Endothelial cell of umbilical vein (primary cell): ENCODE measurements at regions of chr3 and their contacts with region 1.

Region 1: DNA sequence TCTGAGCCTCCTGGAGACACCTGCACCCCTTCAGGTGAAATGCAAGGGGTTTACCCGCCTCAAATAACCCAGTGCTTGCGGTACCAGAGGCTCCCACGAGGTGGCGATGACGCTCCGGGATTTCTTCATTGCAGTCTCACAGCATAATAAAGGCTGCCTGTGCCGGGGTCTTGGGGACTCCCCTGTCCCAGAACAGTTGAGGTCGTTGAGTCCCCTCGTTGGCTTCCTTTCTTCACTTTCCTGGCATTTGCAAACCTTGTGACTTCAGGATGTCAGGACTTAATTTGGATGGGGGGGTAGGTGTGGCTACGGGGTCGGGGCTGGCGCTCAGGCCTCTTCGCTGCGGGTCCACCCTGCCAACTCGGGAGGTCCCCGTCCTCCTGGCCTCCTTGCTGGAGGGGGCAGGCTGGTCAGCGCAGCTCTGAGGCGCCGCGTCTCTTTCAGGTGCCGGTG is 1.3 kb downstream of the GNAT1 start:
- DNase-seq: peak; percentile 69
- H3K4me3 ChIP-seq: no peak overlapping the region
- H3K27ac ChIP-seq: no peak overlapping the region
- H3K4me1 ChIP-seq: peaks cover 5% of the 10 kb centered on the region
- H3K27me3 ChIP-seq: peaks cover 11 to 13% of the 10 kb centered on the region in 2 experiments
- CTCF ChIP-seq: peak; percentile 87 to 92
- POLR2A ChIP-seq: no peak

Region 2: GRCh38 chr3:50008931-50009330 is 183.8 kb before region 1 on chr3:
- CTCF ChIA-PET with region 1: no interaction called
- POLR2A ChIA-PET with region 1: no interaction called
- dilution Hi-C with region 1: no loop called
- intact Hi-C with region 1: no loop called
- DNase-seq: no peak
- H3K4me3 ChIP-seq: no peak overlapping the region
- H3K27ac ChIP-seq: no peak overlapping the region
- H3K4me1 ChIP-seq: no peaks in the 10 kb centered on the region
- H3K27me3 ChIP-seq: no peaks in the 10 kb centered on the region
- CTCF ChIP-seq: no peak
- POLR2A ChIP-seq: no peak

Region 3: DNA sequence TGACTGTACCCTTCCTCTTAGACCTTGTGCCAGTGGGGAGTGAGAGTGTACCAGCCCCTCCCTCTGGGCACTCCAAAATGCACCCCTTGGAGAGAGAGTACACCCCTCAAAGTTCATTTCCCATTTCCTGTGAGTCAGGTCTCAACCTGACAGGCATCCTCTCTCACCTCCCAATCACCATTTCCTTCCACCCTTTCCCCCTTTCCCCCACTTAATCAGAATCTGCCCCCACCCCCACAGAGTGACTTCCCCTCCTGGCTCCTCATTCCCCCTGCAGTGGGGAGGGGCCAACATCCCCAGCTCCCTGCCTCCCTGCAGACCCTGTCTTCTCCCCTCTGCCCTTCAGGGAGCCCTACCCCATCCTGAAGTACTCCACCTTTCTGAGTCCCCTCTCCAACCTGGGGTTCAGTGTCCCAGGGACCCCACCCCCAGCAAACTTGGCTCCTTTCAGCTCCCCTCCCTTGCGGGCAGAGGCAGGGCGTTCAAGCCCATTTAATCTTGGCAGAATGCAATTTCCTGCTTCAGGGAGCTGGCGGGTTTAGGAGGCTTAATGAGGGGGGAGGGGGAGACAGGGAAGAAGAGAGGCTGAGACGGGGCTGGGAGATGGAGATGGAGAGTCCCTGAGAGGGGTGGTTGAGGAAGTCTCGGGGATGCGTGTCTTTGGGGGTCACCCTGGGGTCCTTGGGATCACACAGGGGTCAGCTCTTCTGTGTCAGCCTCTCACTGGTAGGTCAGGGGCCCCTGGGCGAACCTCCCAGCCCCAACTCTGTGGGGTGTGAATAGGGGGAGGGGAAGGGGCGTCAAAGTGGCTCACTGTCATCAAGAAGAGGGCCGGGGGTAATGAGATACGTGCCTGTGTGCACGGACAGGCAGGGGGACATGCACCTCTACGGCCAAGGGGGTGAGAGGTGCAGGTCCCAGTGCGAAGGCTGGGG is 54.2 kb before region 1 on chr3:
- CTCF ChIA-PET with region 1: interaction called, 8 read pairs
- POLR2A ChIA-PET with region 1: interaction called, 3 read pairs
- dilution Hi-C with region 1: no loop called
- intact Hi-C with region 1: loop called (anchors 5 kb)
- DNase-seq: peak; percentile 52
- H3K4me3 ChIP-seq: no peak overlapping the region
- H3K27ac ChIP-seq: peak overlapping the region; percentile 27
- H3K4me1 ChIP-seq: peaks cover 26% of the 10 kb centered on the region
- H3K27me3 ChIP-seq: no peaks in the 10 kb centered on the region
- CTCF ChIP-seq: no peak
- POLR2A ChIP-seq: no peak

Region 4: GRCh38 chr3:50205414-50206276 is 12.9 kb after region 1 on chr3:
- CTCF ChIA-PET with region 1: interaction called, 53 read pairs
- POLR2A ChIA-PET with region 1: no interaction called
- dilution Hi-C with region 1: no loop called
- intact Hi-C with region 1: no loop called
- DNase-seq: peak; percentile 31
- H3K4me3 ChIP-seq: peak overlapping the region in 2 of 3 experiments; percentile 27 to 36
- H3K27ac ChIP-seq: no peak overlapping the region
- H3K4me1 ChIP-seq: peaks cover 3% of the 10 kb centered on the region
- H3K27me3 ChIP-seq: peaks cover 18% of the 10 kb centered on the region in 2 experiments
- CTCF ChIP-seq: no peak
- POLR2A ChIP-seq: no peak

Region 5: DNA sequence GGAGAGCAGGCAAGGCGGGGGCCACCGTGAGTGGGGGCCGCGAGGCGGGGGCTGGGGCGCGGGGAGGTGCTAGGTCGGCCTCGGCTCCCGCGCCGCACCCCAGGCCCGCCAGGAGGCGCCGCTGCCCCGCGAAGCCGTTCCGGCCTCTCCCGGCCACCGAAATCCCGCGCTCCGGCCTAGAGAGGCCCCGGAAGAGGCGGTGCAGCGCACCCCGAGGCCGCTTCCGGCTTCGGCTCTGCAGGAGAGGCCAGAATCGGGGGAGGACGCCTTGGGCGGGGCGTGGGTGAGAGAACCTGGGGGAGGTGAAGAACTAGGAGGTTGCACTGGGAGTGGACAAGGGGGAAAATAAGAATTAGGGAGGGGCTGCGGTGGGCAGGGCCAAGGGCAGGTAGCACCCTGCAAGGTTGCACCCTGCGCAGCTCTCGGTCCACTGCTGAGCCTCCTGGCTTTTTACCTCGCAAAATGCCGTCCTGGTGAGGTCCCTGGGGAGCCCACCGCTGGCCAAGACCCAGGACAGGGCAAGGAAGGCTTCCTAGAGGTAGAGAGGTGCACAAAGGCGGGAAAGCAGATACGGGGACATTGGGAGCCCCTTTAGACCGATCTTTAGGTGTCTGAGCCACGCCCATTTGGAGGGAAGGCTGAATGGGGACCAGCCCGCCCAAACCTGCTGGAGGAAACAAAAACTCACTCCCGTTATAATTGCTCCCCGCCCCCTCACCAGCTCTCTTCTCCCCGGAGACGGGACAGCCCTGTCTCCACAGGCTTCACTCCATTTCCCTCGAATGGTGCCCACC is 34.9 kb after region 1 on chr3:
- CTCF ChIA-PET with region 1: interaction called, 314 read pairs
- POLR2A ChIA-PET with region 1: interaction called, 7 read pairs
- dilution Hi-C with region 1: no loop called
- intact Hi-C with region 1: loop called (anchors 1 kb)
- DNase-seq: peak; percentile 62
- H3K4me3 ChIP-seq: peak overlapping the region; percentile 19 to 50 (median 33)
- H3K27ac ChIP-seq: no peak overlapping the region
- H3K4me1 ChIP-seq: peaks cover 13% of the 10 kb centered on the region
- H3K27me3 ChIP-seq: no peaks in the 10 kb centered on the region
- CTCF ChIP-seq: peak; percentile 66 to 76
- POLR2A ChIP-seq: peak; percentile 57

Region 6: DNA sequence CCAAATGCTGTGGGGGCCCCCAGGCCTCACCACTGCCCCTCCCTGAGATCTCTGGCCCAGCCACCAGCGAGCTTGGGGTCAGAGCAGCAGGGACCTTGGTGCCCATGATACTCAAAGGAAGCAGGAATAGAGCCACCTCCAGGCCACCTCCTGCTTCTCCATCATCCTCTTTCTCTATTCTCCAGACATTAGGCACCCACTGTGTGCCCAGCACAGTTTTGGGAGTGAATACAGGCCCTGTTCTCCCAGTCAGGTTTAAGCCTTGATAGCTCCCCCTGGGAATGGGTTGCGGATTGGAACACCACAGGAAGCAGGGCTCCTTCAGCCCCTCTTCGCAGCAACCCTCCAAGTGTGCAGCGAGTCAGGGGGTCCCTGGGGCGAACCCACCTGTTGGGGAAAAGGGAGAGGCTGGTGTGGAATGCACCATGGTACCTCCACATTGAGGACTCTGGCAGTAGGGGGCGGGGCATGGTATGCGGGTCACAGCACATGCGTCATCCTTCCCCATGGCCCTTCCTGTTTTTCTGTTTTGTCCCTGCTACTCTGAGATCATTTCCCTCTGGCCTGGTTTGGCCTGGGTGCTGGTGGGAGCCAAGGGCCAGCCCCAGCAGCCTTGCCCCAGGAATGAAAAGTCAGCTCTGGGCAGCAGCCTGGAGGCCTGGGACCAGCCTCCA is 62.0 kb after region 1 on chr3:
- CTCF ChIA-PET with region 1: interaction called, 28 read pairs
- POLR2A ChIA-PET with region 1: no interaction called
- dilution Hi-C with region 1: no loop called
- intact Hi-C with region 1: no loop called
- DNase-seq: peak; percentile 91
- H3K4me3 ChIP-seq: no peak overlapping the region
- H3K27ac ChIP-seq: peak overlapping the region; percentile 98
- H3K4me1 ChIP-seq: peaks cover 64% of the 10 kb centered on the region
- H3K27me3 ChIP-seq: no peaks in the 10 kb centered on the region
- CTCF ChIP-seq: no peak
- POLR2A ChIP-seq: peak; percentile 42

Region 7: GRCh38 chr3:50290124-50290641 is 97.5 kb after region 1 on chr3:
- CTCF ChIA-PET with region 1: no interaction called
- POLR2A ChIA-PET with region 1: no interaction called
- dilution Hi-C with region 1: no loop called
- intact Hi-C with region 1: no loop called
- DNase-seq: no peak
- H3K4me3 ChIP-seq: no peak overlapping the region
- H3K27ac ChIP-seq: no peak overlapping the region
- H3K4me1 ChIP-seq: peaks cover 11% of the 10 kb centered on the region
- H3K27me3 ChIP-seq: no peaks in the 10 kb centered on the region
- CTCF ChIP-seq: no peak
- POLR2A ChIP-seq: no peak

Region 8: GRCh38 chr3:50321336-50322114 is 128.8 kb after region 1 on chr3:
- CTCF ChIA-PET with region 1: interaction called, 21 read pairs
- POLR2A ChIA-PET with region 1: no interaction called
- dilution Hi-C with region 1: no loop called
- intact Hi-C with region 1: loop called (anchors 1 kb)
- DNase-seq: peak; percentile 91
- H3K4me3 ChIP-seq: peak overlapping the region; percentile 65 to 89 (median 89)
- H3K27ac ChIP-seq: peak overlapping the region; percentile 99
- H3K4me1 ChIP-seq: peaks cover 63% of the 10 kb centered on the region
- H3K27me3 ChIP-seq: no peaks in the 10 kb centered on the region
- CTCF ChIP-seq: peak; percentile 41 to 82
- POLR2A ChIP-seq: no peak

Region 9: DNA sequence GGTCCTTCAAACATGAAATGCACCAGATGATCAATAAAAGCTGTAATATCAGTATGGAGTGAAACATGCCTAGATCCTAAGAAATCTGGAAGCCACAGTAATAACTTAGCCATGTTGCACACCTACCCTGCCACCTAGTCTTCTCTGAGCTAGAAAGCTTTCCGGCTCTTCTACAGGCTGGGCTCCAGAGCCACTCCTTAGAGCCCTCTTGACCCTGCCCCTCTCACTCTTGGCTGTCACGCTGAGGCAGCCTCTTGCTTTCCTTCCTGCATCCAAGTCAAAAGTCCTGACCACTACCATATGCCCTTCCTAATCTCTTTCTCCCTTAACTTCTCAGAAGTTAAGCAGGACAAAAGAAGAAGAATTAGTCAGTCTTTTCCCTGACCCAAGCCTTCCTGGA is 1216.1 kb after region 1 on chr3:
- CTCF ChIA-PET with region 1: no interaction called
- POLR2A ChIA-PET with region 1: no interaction called
- dilution Hi-C with region 1: no loop called
- intact Hi-C with region 1: no loop called
- DNase-seq: no peak
- H3K4me3 ChIP-seq: no peak overlapping the region
- H3K27ac ChIP-seq: no peak overlapping the region
- H3K4me1 ChIP-seq: no peaks in the 10 kb centered on the region
- H3K27me3 ChIP-seq: no peaks in the 10 kb centered on the region
- CTCF ChIP-seq: no peak
- POLR2A ChIP-seq: no peak